Gastrocnemius medialis (tissue), 4 donors: ENCODE measurements at regions of chr12 and their contacts with region 1.

Region 1: DNA sequence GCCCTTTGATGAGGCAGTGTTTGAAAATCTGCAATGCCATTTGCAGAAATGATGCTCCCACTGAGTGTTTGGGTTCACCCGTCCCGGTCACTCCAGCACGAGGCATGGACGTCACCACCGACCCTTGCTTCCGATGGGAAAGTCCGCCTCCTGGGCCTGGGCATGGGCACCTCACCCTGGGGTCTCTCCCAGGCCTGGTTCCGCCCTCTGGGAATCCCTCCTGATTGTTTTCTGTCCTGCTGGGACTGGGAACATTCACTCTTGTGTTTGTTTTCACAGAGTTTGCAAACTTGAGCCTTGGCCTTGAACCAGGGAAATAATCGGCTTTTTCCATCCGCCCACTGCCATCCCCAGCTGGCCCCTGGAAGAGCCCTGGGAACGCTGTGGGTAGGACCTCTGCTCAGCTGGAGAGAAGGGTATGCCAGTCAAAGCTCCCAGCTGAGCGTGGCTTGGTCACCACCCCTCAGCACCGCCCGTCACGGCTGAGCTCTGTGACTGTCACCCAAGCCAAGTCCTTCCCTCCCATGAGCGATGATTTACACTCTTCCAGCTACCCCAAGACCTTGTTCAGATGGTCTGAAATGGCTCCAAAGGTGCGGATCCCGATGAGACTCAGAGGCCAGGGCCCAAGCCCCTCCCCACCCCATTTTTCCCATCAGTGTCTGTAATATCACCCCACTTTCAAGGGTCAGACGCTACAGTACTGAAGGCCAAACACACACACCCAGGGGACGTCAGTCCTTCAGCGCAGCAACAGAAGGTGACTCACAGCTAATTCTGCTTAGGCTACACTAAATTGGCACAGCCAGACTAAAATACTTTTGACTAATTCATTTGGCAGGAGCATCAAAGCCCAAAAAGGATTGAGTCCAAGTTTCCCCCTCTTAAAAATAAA is 34.1 kb upstream of the FZD10 start:
- DNase-seq: peak in 1 of 2 donors; percentile 35
- ATAC-seq: peak; percentile 67 to 75
- H3K4me3 ChIP-seq: no peak overlapping the region
- H3K27ac ChIP-seq: peak overlapping the region; percentile 56 to 65 (median 59)
- H3K4me1 ChIP-seq: no peaks in the 10 kb centered on the region
- H3K27me3 ChIP-seq: peaks cover 0 to 2% (median 0%) of the 10 kb centered on the region in 3 donors
- CTCF ChIP-seq: no peak
- POLR2A ChIP-seq: no peak

Region 2: DNA sequence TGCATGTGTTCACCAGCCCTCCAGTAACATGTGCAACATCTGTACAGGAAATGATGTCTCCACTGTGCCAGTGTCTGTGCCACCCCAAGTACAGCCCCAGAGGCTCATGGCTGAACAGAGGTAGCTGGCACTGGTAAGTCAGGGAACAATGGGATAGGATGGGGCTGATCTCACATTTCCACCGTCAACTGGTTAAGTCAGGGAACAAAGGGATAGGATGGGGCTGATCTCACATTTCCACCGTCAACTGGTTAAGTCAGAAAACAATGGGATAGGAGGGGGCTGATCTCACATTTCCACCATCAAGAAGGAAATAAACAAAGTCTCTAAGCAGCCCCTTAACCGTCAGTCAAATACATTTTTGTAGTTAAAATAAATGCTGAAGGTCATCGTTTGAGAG is 471.0 kb before region 1 on chr12:
- in situ Hi-C with region 1: no loop called
- intact Hi-C with region 1: no loop called
- DNase-seq: no peak
- ATAC-seq: no peak
- H3K4me3 ChIP-seq: no peak overlapping the region
- H3K27ac ChIP-seq: no peak overlapping the region
- H3K4me1 ChIP-seq: no peaks in the 10 kb centered on the region
- H3K27me3 ChIP-seq: no peaks in the 10 kb centered on the region
- CTCF ChIP-seq: no peak
- POLR2A ChIP-seq: no peak

Region 3: GRCh38 chr12:129887117-129887516 is 241.0 kb before region 1 on chr12:
- in situ Hi-C with region 1: no loop called
- intact Hi-C with region 1: no loop called
- DNase-seq: no peak
- ATAC-seq: no peak
- H3K4me3 ChIP-seq: no peak overlapping the region
- H3K27ac ChIP-seq: no peak overlapping the region
- H3K4me1 ChIP-seq: no peaks in the 10 kb centered on the region
- H3K27me3 ChIP-seq: no peaks in the 10 kb centered on the region
- CTCF ChIP-seq: no peak
- POLR2A ChIP-seq: no peak

Region 4: DNA sequence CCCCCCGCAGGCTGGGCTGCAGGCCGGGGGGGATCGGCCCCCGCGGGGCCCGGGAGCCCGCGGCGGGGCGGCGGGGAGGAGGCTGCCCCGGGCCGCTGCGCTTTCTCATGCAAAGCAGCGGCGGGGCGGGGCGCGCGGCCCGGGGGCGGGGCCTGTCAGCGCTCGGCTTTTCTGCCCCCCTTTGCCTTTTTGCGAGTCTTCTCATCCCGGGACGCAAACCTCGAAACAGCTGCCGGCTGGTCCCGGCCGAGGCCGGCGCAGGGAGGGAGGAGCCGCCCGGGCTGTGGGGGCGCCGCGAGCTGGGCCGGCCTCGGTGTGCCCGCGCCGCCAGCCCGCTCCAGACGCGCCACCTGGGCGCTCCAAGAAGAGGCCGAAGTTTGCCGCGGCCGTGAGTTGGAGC is 34.1 kb after region 1 on chr12 and contains the start of gene FZD10:
- in situ Hi-C with region 1: no loop called
- intact Hi-C with region 1: loop called (anchors 5 kb)
- DNase-seq: peak in 1 of 2 donors; percentile 22
- ATAC-seq: peak; percentile 39 to 50
- H3K4me3 ChIP-seq: peak within 1 kb of the TSS; percentile 44 to 54 (median 50)
- H3K27ac ChIP-seq: peak within 1 kb of the TSS in 3 of 4 donors; percentile 23 to 39 (median 33)
- H3K4me1 ChIP-seq: no peaks in the 10 kb centered on the region
- H3K27me3 ChIP-seq: peaks cover 31 to 36% (median 34%) of the 10 kb centered on the region in 3 donors
- CTCF ChIP-seq: no peak
- POLR2A ChIP-seq: peak; percentile 8 to 18
- total RNA-seq, gene FZD10: 0.15 to 2.3 (median 1.1) TPM in 3 of 4 donors, not detected in the other

Region 5: DNA sequence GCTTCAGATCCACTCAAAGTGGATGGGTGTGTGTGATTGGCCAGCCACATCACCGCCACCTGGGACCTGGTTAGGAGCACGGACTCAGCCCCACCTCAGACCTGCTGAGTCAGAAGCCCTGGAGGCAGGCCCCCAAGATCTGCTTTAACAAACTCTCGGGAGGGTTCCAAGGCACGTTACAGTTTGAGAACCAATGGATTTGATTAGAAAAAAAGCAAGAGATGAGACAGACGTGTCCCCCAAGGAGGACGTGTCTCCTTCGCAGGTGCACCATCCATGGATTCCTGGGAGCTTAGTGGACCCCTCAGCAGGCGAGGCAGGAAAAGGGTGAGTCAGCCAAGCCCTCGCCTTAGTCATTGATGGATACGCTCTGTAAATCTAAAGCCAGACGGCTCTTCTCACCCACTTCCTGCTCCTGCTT is 58.6 kb after region 1 on chr12:
- in situ Hi-C with region 1: no loop called
- intact Hi-C with region 1: loop called (anchors 10 kb)
- DNase-seq: no peak
- ATAC-seq: no peak
- H3K4me3 ChIP-seq: no peak overlapping the region
- H3K27ac ChIP-seq: peak overlapping the region in 1 of 4 donors; percentile 13
- H3K4me1 ChIP-seq: no peaks in the 10 kb centered on the region
- H3K27me3 ChIP-seq: no peaks in the 10 kb centered on the region
- CTCF ChIP-seq: no peak
- POLR2A ChIP-seq: no peak

Region 6: GRCh38 chr12:130347588-130347987 is 219.4 kb after region 1 on chr12:
- in situ Hi-C with region 1: no loop called
- intact Hi-C with region 1: no loop called
- DNase-seq: no peak
- ATAC-seq: no peak
- H3K4me3 ChIP-seq: no peak overlapping the region
- H3K27ac ChIP-seq: no peak overlapping the region
- H3K4me1 ChIP-seq: no peaks in the 10 kb centered on the region
- H3K27me3 ChIP-seq: peaks cover 0 to 9% (median 3%) of the 10 kb centered on the region in 3 donors
- CTCF ChIP-seq: no peak
- POLR2A ChIP-seq: no peak